Heart left ventricle (tissue), 16 donors: ENCODE measurements at regions of chr9 and their contacts with region 1.

Region 1: DNA sequence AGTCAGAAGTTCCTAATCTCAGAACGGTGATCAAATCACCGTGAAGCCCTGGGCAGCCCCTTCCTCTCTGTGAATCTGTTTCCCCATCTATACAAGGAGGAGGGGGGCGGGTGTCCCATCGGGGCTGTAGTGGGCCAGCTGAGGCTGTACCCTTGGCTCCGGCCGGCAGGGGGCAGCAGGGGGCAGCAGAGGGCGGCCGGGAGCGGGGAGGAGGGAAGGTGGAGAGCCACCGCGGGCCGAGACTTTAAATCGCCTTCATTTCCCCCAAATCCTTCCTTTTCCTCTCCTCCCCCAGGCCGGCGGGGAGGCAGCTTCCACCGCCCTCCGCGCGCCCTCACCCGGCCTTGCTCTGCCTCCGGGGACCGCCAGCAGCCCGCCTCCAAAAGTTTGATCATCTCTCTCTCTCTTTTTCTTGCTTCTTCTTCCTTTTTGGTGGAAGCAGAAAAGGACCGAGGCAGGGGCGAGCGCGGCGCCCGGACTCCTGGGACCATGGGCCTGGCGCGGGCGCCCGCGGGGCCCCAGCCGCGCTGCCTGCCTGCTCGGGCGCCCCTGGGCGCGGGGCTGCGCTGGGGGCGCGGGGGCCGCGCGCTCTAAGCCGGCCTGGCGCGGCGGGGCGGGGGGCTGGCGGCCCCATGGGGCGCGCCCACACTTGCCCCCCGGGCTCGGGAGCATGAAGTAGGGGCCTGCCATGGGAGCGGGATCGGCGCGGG is at the start of gene COL27A1:
- DNase-seq: peak; percentile 80 to 91 (median 86)
- ATAC-seq: peak; percentile 85 to 91 (median 88)
- H3K4me3 ChIP-seq: peak within 1 kb of the TSS; percentile 58 to 84 (median 67)
- H3K27ac ChIP-seq: peak within 1 kb of the TSS in 11 of 12 donors; percentile 24 to 77 (median 75)
- H3K4me1 ChIP-seq: peaks cover 0 to 49% (median 14%) of the 10 kb centered on the region in 12 donors
- H3K27me3 ChIP-seq: peaks cover 0 to 44% (median 17%) of the 10 kb centered on the region in 9 donors
- CTCF ChIP-seq: peak; percentile 88 to 96 (median 94)
- POLR2A ChIP-seq: no peak
- total RNA-seq, gene COL27A1: 2.3 to 10.8 (median 5.2) TPM

Region 2: GRCh38 chr9:114108016-114108833 is 47.2 kb before region 1 on chr9:
- intact Hi-C with region 1: loop called in 9 of 10 experiments (anchors 2 to 5 kb)
- DNase-seq: peak; percentile 77 to 89 (median 80)
- ATAC-seq: peak; percentile 89 to 98 (median 97)
- H3K4me3 ChIP-seq: no peak overlapping the region
- H3K27ac ChIP-seq: no peak overlapping the region
- H3K4me1 ChIP-seq: peaks cover 0 to 18% (median 2%) of the 10 kb centered on the region in 12 donors
- H3K27me3 ChIP-seq: no peaks in the 10 kb centered on the region
- CTCF ChIP-seq: peak; percentile 87 to 97 (median 90)
- POLR2A ChIP-seq: no peak

Region 3: GRCh38 chr9:114216081-114216480 is 60.7 kb after region 1 on chr9:
- intact Hi-C with region 1: loop called in 4 of 10 experiments (anchors 5 to 10 kb)
- DNase-seq: peak; percentile 62 to 77 (median 70)
- ATAC-seq: peak; percentile 56 to 82 (median 62)
- H3K4me3 ChIP-seq: no peak overlapping the region
- H3K27ac ChIP-seq: peak overlapping the region in 6 of 12 donors; percentile 23 to 59 (median 36)
- H3K4me1 ChIP-seq: peaks cover 0 to 41% (median 20%) of the 10 kb centered on the region in 12 donors
- H3K27me3 ChIP-seq: no peaks in the 10 kb centered on the region
- CTCF ChIP-seq: no peak
- POLR2A ChIP-seq: no peak

Region 4: GRCh38 chr9:114263853-114264510 is 108.6 kb after region 1 on chr9:
- intact Hi-C with region 1: loop called in 4 of 10 experiments (anchors 1 to 10 kb)
- DNase-seq: no peak
- ATAC-seq: peak in 3 of 4 donors; percentile 25 to 47 (median 44)
- H3K4me3 ChIP-seq: no peak overlapping the region
- H3K27ac ChIP-seq: no peak overlapping the region
- H3K4me1 ChIP-seq: peaks cover 0 to 8% (median 0%) of the 10 kb centered on the region in 12 donors
- H3K27me3 ChIP-seq: no peaks in the 10 kb centered on the region
- CTCF ChIP-seq: peak in 7 of 12 donors; percentile 13 to 51 (median 32)
- POLR2A ChIP-seq: no peak

Region 5: GRCh38 chr9:114285166-114285867 is 129.9 kb after region 1 on chr9:
- intact Hi-C with region 1: loop called in 8 of 10 experiments (anchors 2 to 5 kb)
- DNase-seq: peak; percentile 4 to 68 (median 14)
- ATAC-seq: no peak
- H3K4me3 ChIP-seq: no peak overlapping the region
- H3K27ac ChIP-seq: no peak overlapping the region
- H3K4me1 ChIP-seq: peaks cover 0 to 9% (median 0%) of the 10 kb centered on the region in 12 donors
- H3K27me3 ChIP-seq: no peaks in the 10 kb centered on the region
- CTCF ChIP-seq: no peak
- POLR2A ChIP-seq: no peak